Activated T-helper 1 cell treated with anti-CD3 and anti-CD28 coated beads, Interleukin-12 subunit alpha, Interleukin-12 subunit beta, Interleukin-2, Interleukin-4 antibody, amounts not matched to agents 30 ng/mL and 10 ng/mL and 1 ng/mL, durations not matched to agents 14 hours and 24 hours and 36 hours (primary cell): ENCODE measurements at regions of chr12 and their contacts with region 1.

Region 1: DNA sequence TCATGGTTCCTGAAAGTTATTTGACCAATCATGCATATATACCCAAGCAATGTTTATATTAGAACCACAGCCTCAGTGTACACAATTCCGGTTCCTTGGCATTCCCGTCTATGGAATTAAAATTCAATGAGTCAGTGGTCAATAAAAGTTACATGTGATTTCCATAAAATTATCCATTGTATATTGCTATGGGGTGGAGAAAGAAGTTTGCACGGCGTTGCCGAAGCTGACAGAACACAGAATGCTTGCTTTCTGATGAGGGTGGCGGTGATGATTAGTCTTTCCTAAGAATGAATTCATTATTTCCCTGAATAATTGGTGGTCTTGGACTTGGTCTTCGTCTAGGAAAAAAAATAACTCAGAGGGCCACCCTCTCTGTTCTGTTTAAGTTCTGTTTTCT is 214.1 kb downstream of the ANO2 start:
- DNase-seq: no peak
- H3K4me3 Mint-ChIP-seq: no peak overlapping the region
- H3K27ac Mint-ChIP-seq: no peak overlapping the region
- H3K4me1 Mint-ChIP-seq: no peaks in the 10 kb centered on the region
- H3K27me3 Mint-ChIP-seq: peaks cover 1% of the 10 kb centered on the region

Region 2: DNA sequence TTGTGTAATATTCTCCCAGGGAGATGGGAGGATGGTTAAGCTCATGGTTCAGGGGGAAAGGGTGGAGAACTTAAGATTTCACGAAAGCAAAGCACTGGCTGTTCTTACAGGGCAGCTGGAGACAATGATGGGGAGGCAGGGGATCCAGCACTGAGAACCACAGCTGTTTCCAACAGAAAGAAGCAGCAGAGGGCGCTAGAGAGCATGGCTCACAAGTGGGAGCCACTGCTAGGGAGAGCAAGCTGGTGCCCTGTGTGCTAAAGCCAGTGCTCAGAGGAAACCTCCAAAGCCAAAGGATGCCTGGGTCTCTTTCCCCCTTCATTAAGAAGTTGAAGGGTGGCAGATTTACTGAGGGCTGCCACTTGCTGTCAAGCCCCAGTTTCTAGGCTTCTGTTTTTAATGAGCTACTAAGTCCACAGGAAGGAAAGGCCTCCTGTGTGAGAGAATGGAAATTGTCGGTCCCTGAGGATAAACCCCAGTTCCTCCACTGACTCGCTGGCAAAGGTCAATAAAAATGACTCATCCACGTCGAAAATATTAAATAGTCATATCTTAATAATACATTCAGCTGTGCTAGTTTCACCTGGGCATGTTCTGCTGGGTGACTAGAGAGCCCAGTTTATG is 14.4 kb after region 1 on chr12:
- intact Hi-C with region 1: loop called (anchors 2 kb)
- DNase-seq: peak; percentile 25
- H3K4me3 Mint-ChIP-seq: no peak overlapping the region
- H3K27ac Mint-ChIP-seq: no peak overlapping the region
- H3K4me1 Mint-ChIP-seq: no peaks in the 10 kb centered on the region
- H3K27me3 Mint-ChIP-seq: peaks cover 5% of the 10 kb centered on the region